Upper lobe of right lung (tissue), 1 donor: ENCODE measurements at regions of chr5 and their contacts with region 1.

Region 1: GRCh38 chr5:39080597-39081204 is 6.5 kb upstream of the RICTOR start:
- DNase-seq: no peak
- ATAC-seq: peak; percentile 99
- H3K4me3 ChIP-seq: no peak overlapping the region
- H3K27ac ChIP-seq: no peak overlapping the region
- H3K4me1 ChIP-seq: peaks cover 11% of the 10 kb centered on the region
- H3K27me3 ChIP-seq: peaks cover 5% of the 10 kb centered on the region
- CTCF ChIP-seq: peak; percentile 86

Region 2: DNA sequence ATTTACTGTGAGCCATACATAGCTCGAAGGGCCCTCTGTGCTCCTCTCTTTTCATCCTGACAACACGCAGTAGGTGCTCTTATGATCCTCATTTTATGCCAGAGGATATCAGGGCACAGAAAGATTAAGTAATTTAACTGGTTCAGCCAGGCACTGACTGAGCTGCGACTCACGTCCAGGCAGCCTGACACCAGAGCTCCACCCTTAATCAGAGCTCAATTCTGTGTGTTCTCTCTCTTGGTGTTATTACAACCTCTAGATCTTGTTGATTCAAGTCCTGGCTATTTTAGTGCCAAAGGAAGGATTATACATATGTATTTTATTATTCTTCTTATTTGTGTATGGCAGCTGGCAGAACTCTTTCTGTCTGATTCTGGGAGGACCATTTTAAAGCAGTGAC is 175.2 kb before region 1 on chr5:
- intact Hi-C with region 1: no loop called
- DNase-seq: no peak
- ATAC-seq: no peak
- H3K4me3 ChIP-seq: no peak overlapping the region
- H3K27ac ChIP-seq: no peak overlapping the region
- H3K4me1 ChIP-seq: no peaks in the 10 kb centered on the region
- H3K27me3 ChIP-seq: no peaks in the 10 kb centered on the region
- CTCF ChIP-seq: no peak

Region 3: DNA sequence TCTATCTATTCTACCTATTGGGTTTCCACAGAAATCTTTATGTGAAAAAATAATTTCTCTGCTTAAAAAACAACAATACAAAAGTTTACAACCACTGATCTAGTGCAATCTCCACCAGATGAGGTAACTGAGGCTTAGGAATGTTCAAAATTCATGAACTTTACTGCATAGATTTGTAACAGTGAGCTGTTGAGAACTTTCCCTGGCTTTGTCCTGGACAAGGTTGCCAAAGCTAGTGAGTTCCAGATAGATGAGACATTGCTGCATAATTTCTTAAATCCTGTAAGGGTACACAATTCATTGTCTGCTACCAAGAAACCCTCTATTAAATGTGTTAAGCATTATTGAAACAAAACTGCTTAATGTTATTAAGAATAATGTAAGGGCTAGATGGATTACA is 132.2 kb before region 1 on chr5:
- intact Hi-C with region 1: no loop called
- DNase-seq: no peak
- ATAC-seq: no peak
- H3K4me3 ChIP-seq: no peak overlapping the region
- H3K27ac ChIP-seq: no peak overlapping the region
- H3K4me1 ChIP-seq: no peaks in the 10 kb centered on the region
- H3K27me3 ChIP-seq: no peaks in the 10 kb centered on the region
- CTCF ChIP-seq: no peak

Region 4: DNA sequence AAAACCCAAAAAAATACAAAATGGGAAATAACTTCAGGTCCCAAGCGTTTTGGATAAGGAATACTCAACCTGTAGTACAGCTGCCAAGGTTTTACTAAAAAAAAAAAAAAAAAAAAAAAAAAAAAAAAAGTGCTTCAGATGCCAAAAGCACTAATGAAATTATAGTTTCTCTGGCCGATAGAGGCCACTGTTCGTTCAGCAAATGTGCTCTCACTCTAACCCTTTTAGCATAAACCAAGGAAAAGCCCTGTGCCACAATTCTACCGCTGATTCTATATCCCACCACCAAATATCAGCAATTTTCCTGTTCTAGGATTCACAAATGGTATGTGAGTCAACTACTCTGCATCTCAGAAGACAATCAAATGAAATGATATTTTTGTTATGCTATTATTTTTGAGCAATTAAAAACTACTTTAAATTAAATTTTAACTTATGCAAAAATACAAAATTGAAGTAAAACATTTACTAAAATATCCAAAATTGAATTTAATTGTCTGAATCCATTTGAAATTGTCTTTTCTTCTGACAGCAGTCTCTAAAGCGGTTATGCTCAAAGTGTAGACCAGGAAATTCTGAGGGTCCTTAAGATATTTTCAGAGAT is 86.3 kb before region 1 on chr5:
- intact Hi-C with region 1: loop called (anchors 10 kb)
- DNase-seq: no peak
- ATAC-seq: peak; percentile 79
- H3K4me3 ChIP-seq: no peak overlapping the region
- H3K27ac ChIP-seq: no peak overlapping the region
- H3K4me1 ChIP-seq: no peaks in the 10 kb centered on the region
- H3K27me3 ChIP-seq: no peaks in the 10 kb centered on the region
- CTCF ChIP-seq: peak; percentile 58